Tibial artery (tissue), 4 donors: ENCODE measurements at regions of chr5 and their contacts with region 1.

Region 1: DNA sequence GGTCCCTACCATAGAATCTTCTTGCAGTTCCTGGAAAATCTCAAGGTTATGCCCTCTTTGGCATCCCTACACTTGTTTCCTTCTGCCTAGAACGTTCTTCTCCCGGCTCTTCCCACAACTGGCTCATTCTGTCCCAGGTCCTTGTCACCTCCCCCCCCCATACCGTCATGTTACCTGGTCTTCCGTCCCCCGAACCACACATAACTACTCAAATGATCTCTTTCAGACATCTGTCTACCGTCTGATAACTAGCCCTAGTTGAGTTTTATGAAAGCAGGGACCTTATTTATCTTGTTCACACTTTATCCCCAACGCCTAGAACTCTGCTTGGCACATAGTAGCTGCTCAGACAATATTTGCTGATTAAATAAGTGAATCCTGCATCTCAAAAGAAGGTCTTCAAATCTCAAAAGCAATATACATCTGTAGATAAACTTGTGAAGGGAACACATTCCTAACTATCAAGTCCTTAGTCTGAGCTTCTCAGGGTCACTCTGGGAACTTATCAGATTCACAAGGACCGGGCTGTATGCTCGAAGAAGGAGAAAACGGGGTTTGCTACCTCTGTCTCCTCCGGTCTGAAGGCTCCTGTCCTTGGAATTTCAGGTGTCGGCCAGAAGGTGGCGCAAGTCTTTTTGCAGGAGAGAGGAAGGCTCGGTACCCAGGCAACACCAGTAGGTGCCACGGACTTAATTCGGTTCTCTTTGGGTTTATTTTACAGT is 30.0 kb downstream of the LCP2 start:
- DNase-seq: peak; percentile 77 to 86
- H3K4me3 ChIP-seq: peak overlapping the region in 1 of 2 donors; percentile 41
- H3K27ac ChIP-seq: peak overlapping the region in 1 of 2 donors; percentile 14
- H3K4me1 ChIP-seq: peaks cover 0 to 7% (median 3%) of the 10 kb centered on the region in 4 donors
- H3K27me3 ChIP-seq: peaks cover 0 to 17% of the 10 kb centered on the region in 2 donors
- CTCF ChIP-seq: peak; percentile 83 to 87

Region 2: GRCh38 chr5:170420780-170421412 is 153.3 kb after region 1 on chr5:
- intact Hi-C with region 1: loop called (anchors 2 kb)
- DNase-seq: peak; percentile 61 to 73
- H3K4me3 ChIP-seq: no peak overlapping the region
- H3K27ac ChIP-seq: no peak overlapping the region
- H3K4me1 ChIP-seq: no peaks in the 10 kb centered on the region
- H3K27me3 ChIP-seq: peaks cover 0 to 4% of the 10 kb centered on the region in 2 donors
- CTCF ChIP-seq: peak; percentile 72 to 81